Mammary epithelial cell (primary cell): ENCODE measurements at regions of chr16 and their contacts with region 1.

Region 1: GRCh38 chr16:80273635-80274538 is 266.9 kb upstream of the DYNLRB2 start:
- DNase-seq: peak; percentile 79
- H3K4me3 ChIP-seq: no peak overlapping the region
- H3K27ac ChIP-seq: peak overlapping the region; percentile 87
- H3K4me1 ChIP-seq: peaks cover 24% of the 10 kb centered on the region
- H3K27me3 ChIP-seq: no peaks in the 10 kb centered on the region
- CTCF ChIP-seq: no peak

Region 2: GRCh38 chr16:80006241-80007215 is 267.4 kb before region 1 on chr16:
- CTCF ChIA-PET with region 1: no interaction called
- dilution Hi-C with region 1: no loop called
- in situ Hi-C with region 1: no loop called
- intact Hi-C with region 1: no loop called
- DNase-seq: peak; percentile 49
- H3K4me3 ChIP-seq: no peak overlapping the region
- H3K27ac ChIP-seq: no peak overlapping the region
- H3K4me1 ChIP-seq: peaks cover 8% of the 10 kb centered on the region
- H3K27me3 ChIP-seq: no peaks in the 10 kb centered on the region
- CTCF ChIP-seq: no peak

Region 3: DNA sequence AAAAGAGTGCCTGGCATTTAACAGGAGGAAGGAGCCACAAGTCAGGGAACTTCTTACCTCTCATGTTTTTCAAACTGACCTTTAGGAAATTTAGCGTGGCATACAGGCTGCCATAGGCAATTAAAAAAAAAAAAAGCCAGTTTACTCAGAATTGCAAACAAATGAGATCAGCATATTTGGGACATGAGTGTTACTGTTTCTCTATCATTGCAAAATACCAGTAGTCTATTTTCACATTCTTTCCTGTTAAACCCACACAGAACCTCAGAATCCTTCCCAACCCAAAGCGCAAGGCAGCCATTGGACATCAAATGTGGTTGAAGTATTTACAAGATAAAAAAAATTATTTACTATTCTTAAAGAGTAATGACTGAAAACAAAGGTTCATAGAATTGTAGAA is 99.5 kb before region 1 on chr16:
- CTCF ChIA-PET with region 1: no interaction called
- dilution Hi-C with region 1: no loop called
- in situ Hi-C with region 1: no loop called
- intact Hi-C with region 1: loop called (anchors 10 kb)
- DNase-seq: peak; percentile 70
- H3K4me3 ChIP-seq: no peak overlapping the region
- H3K27ac ChIP-seq: peak overlapping the region; percentile 38
- H3K4me1 ChIP-seq: peaks cover 25% of the 10 kb centered on the region
- H3K27me3 ChIP-seq: no peaks in the 10 kb centered on the region
- CTCF ChIP-seq: no peak